A673 (cell line): ENCODE measurements at regions of chr6 and their contacts with region 1.

Region 1: DNA sequence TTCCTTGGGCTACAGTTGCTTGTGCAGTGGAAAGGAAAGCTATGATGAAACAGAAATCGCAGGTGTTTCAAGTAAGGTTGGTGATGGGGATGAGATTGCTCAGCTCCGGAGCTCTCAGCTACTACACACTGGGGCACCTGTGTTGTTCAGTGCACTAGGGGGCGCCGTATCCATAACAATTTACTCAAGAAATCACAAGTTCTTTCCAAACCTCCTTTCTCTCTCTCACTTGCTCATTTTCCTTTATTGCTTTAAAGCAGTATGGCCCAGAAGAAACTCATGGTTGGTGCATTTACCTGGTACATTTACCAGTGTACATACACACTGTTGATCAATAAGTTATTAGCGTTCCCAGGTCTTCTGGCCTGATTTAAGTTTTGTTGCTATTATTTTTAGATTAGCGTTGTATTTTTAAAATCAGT is 235.2 kb upstream of the TAB2 start:
- DNase-seq: peak; percentile 64
- H3K4me3 ChIP-seq: no peak overlapping the region
- H3K27ac ChIP-seq: no peak overlapping the region
- H3K4me1 ChIP-seq: no peaks in the 10 kb centered on the region
- H3K27me3 ChIP-seq: peaks cover 8% of the 10 kb centered on the region
- CTCF ChIP-seq: peak; percentile 86

Region 2: GRCh38 chr6:149190224-149190831 is 108.0 kb after region 1 on chr6:
- CTCF ChIA-PET with region 1: no interaction called
- POLR2A ChIA-PET with region 1: no interaction called
- intact Hi-C with region 1: no loop called
- DNase-seq: peak; percentile 60
- H3K4me3 ChIP-seq: no peak overlapping the region
- H3K27ac ChIP-seq: no peak overlapping the region
- H3K4me1 ChIP-seq: no peaks in the 10 kb centered on the region
- H3K27me3 ChIP-seq: no peaks in the 10 kb centered on the region
- CTCF ChIP-seq: peak; percentile 56

Region 3: DNA sequence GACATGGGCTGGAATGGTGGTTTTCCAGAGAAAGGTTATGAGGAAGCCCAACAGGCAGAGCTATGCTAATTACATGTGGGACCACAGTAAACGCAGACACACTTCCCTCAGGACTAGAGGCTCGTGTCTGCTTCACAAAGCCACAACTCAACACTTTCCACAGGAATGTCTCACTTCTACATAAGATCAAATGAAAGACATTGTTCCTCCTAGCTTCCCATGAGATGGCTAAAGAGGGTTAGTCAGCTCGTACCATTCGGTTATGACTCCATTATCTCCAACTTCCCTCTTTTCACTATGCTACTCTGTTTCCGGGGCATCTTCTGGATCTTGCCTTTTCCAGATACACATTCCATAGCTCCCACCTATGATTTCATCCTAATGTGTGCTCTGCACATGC is 431.6 kb after region 1 on chr6:
- CTCF ChIA-PET with region 1: no interaction called
- POLR2A ChIA-PET with region 1: no interaction called
- intact Hi-C with region 1: loop called (anchors 1 kb)
- DNase-seq: no peak
- H3K4me3 ChIP-seq: no peak overlapping the region
- H3K27ac ChIP-seq: no peak overlapping the region
- H3K4me1 ChIP-seq: no peaks in the 10 kb centered on the region
- H3K27me3 ChIP-seq: no peaks in the 10 kb centered on the region
- CTCF ChIP-seq: no peak